Ascending aorta (tissue), 2 donors: ENCODE measurements at regions of chr12 and their contacts with region 1.

Region 1: GRCh38 chr12:64890873-64891468 is 66.5 kb downstream of the TBC1D30 start:
- DNase-seq: no peak
- H3K4me3 ChIP-seq: no peak overlapping the region
- H3K27ac ChIP-seq: no peak overlapping the region
- H3K4me1 ChIP-seq: no peaks in the 10 kb centered on the region
- H3K27me3 ChIP-seq: no peaks in the 10 kb centered on the region
- CTCF ChIP-seq: peak; percentile 67 to 79 (median 72)

Region 2: GRCh38 chr12:64858882-64859605 is 31.9 kb before region 1 on chr12:
- intact Hi-C with region 1: no loop called
- DNase-seq: no peak
- H3K4me3 ChIP-seq: no peak overlapping the region
- H3K27ac ChIP-seq: no peak overlapping the region
- H3K4me1 ChIP-seq: no peaks in the 10 kb centered on the region
- H3K27me3 ChIP-seq: no peaks in the 10 kb centered on the region
- CTCF ChIP-seq: no peak

Region 3: GRCh38 chr12:65123435-65124063 is 232.6 kb after region 1 on chr12:
- intact Hi-C with region 1: loop called (anchors 1 kb)
- DNase-seq: no peak
- H3K4me3 ChIP-seq: no peak overlapping the region
- H3K27ac ChIP-seq: no peak overlapping the region
- H3K4me1 ChIP-seq: peaks cover 5 to 8% of the 10 kb centered on the region in 2 donors
- H3K27me3 ChIP-seq: peaks cover 11% of the 10 kb centered on the region
- CTCF ChIP-seq: peak in 2 of 3 experiments; percentile 32 to 52

Region 4: GRCh38 chr12:65232476-65233077 is 341.6 kb after region 1 on chr12:
- intact Hi-C with region 1: loop called (anchors 2 kb)
- DNase-seq: no peak
- H3K4me3 ChIP-seq: no peak overlapping the region
- H3K27ac ChIP-seq: no peak overlapping the region
- H3K4me1 ChIP-seq: peaks cover 0 to 7% of the 10 kb centered on the region in 2 donors
- H3K27me3 ChIP-seq: no peaks in the 10 kb centered on the region
- CTCF ChIP-seq: peak; percentile 23 to 50 (median 41)

Region 5: DNA sequence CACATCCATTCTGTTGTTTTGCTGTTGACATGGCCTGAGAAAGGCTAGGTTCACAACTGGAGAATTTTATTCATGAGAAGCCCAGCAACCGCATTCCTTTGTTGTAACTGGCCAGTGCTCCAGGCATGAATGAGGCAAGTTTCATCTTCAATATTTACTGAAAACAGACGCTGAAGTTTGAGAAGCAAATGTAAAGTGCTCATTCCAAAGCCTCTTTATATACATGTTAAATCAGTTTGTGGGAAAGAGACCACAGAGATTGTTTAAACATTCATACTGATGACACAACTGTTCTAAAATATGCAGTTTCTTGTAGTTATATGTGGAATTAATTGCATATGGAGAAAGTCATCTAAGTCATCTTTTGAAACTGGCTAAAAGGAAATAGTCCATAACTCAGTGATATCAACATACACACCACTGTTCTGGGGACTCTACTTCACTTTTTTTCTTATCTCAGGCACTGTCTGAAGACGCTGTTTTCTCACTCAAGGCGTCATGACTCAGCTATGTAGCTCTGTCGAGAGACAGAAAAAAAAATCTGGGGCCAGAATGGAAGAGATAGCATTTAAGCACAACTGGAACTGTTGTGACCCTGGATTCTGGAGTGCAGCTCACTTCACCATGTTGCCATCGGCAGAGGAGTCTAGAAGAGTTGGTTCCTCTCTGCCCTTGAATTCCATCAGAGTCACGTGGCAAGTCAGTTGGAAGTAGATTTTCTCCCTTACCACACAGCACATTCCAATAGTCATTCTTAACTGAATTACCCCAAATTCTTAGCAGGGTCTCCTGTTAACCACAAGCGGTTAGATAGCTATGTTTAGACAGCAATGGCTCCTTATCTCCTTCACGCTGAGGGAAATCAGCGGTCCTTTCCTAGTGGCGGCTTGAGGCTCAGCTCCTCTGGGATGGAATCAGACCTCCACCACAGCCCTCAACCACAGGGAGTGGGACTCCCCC is 674.9 kb after region 1 on chr12:
- intact Hi-C with region 1: loop called (anchors 10 kb)
- DNase-seq: no peak
- H3K4me3 ChIP-seq: no peak overlapping the region
- H3K27ac ChIP-seq: no peak overlapping the region
- H3K4me1 ChIP-seq: no peaks in the 10 kb centered on the region
- H3K27me3 ChIP-seq: no peaks in the 10 kb centered on the region
- CTCF ChIP-seq: no peak

Region 6: DNA sequence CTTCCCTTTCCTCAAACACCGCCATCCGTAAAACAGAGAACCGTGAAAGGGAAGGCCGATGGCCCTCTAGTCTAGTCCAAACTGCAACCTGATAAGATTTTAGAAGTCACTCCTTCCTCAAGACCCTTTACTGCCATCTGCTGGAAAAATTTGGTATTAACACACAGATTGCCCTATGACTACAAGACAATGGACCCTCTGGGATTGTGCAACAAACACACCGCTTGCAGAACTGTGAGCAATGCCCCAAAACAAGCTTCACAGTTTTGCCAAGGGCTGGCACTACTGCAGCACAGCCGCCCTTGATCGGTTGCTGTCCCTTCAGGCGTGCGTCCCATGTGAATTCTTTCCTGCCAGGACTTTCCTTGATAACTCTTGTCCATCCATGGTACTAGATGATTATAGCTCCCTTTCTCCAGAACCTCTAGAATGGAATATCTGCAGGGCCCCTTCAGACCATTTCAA is 1216.5 kb after region 1 on chr12:
- intact Hi-C with region 1: loop called (anchors 1 kb)
- DNase-seq: peak in 1 of 2 donors; percentile 83
- H3K4me3 ChIP-seq: no peak overlapping the region
- H3K27ac ChIP-seq: no peak overlapping the region
- H3K4me1 ChIP-seq: no peaks in the 10 kb centered on the region
- H3K27me3 ChIP-seq: no peaks in the 10 kb centered on the region
- CTCF ChIP-seq: peak; percentile 72 to 85 (median 79)